CD8-positive, alpha-beta memory T cell (primary cell): ENCODE measurements at regions of chr6 and their contacts with region 1.

Region 1: GRCh38 chr6:1424306-1424928 is 35.0 kb downstream of the FOXF2 start:
- DNase-seq: no peak
- H3K4me3 ChIP-seq: no peak overlapping the region
- H3K4me3 Mint-ChIP-seq: no peak overlapping the region
- H3K27ac ChIP-seq: no peak overlapping the region
- H3K27ac Mint-ChIP-seq: no peak overlapping the region
- H3K4me1 ChIP-seq: no peaks in the 10 kb centered on the region
- H3K4me1 Mint-ChIP-seq: peaks cover 0 to 6% (median 3%) of the 10 kb centered on the region in 3 donors
- H3K27me3 ChIP-seq: no peaks in the 10 kb centered on the region
- H3K27me3 Mint-ChIP-seq: peaks cover 12 to 44% of the 10 kb centered on the region in 2 donors

Region 2: GRCh38 chr6:1436334-1437306 is 12.2 kb after region 1 on chr6:
- CTCF ChIA-PET with region 1: interaction called, 20 read pairs
- POLR2A ChIA-PET with region 1: no interaction called
- DNase-seq: peak in 2 of 5 donors; percentile 29
- H3K4me3 ChIP-seq: no peak overlapping the region
- H3K4me3 Mint-ChIP-seq: no peak overlapping the region
- H3K27ac ChIP-seq: no peak overlapping the region
- H3K27ac Mint-ChIP-seq: no peak overlapping the region
- H3K4me1 ChIP-seq: no peaks in the 10 kb centered on the region
- H3K4me1 Mint-ChIP-seq: no peaks in the 10 kb centered on the region
- H3K27me3 ChIP-seq: peaks cover 3% of the 10 kb centered on the region
- H3K27me3 Mint-ChIP-seq: peaks cover 27 to 42% of the 10 kb centered on the region in 2 donors

Region 3: DNA sequence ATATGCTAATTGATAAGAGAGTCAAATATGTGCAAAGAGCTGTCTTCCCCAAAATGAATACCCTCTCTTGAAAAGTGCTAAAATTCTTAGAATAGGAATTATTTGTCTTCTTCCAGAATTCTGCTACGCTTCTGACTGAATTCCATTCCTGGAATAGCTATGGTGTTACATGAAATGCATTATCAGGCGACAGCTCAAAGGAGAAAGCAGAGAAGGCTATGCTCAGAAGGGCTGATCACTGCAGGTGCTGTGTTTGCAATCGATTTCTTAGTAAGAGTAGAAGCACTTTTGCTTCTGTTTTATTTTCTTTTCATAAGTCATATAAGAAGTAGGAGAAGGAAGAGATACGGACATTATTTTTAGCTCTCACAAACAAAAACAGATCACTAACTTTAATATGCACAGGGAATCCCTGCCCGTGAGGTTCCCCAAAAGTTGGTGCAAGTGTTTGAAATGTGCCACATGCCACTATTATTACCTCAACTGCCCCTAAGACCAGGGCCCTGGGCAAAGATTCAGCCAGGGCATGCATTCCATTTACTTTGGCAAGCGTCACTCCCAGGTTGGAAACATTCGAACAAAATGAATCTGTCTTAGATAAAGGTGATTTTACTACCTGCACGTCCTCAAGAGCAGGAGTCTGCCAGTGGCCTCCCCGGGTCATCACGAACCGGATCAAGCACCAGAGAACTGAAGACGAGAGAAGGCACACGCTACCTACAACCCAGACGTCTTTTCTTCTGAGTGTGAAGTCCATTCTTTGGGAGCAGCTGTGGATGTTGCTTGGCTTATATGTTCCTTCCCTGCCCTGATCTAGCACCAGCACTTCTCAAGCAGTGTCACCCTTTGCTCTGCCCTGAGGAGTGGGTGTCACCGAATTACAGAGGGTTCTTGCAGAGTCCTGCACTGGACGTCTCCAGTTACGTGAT is 1319.1 kb after region 1 on chr6:
- CTCF ChIA-PET with region 1: no interaction called
- POLR2A ChIA-PET with region 1: interaction called, 10 read pairs
- DNase-seq: no peak
- H3K4me3 ChIP-seq: no peak overlapping the region
- H3K4me3 Mint-ChIP-seq: no peak overlapping the region
- H3K27ac ChIP-seq: no peak overlapping the region
- H3K27ac Mint-ChIP-seq: no peak overlapping the region
- H3K4me1 ChIP-seq: no peaks in the 10 kb centered on the region
- H3K4me1 Mint-ChIP-seq: no peaks in the 10 kb centered on the region
- H3K27me3 ChIP-seq: no peaks in the 10 kb centered on the region
- H3K27me3 Mint-ChIP-seq: peaks cover 4 to 15% of the 10 kb centered on the region in 2 donors